CD8-positive, alpha-beta T cell (primary cell): ENCODE measurements at regions of chr4 and their contacts with region 1.

Region 1: DNA sequence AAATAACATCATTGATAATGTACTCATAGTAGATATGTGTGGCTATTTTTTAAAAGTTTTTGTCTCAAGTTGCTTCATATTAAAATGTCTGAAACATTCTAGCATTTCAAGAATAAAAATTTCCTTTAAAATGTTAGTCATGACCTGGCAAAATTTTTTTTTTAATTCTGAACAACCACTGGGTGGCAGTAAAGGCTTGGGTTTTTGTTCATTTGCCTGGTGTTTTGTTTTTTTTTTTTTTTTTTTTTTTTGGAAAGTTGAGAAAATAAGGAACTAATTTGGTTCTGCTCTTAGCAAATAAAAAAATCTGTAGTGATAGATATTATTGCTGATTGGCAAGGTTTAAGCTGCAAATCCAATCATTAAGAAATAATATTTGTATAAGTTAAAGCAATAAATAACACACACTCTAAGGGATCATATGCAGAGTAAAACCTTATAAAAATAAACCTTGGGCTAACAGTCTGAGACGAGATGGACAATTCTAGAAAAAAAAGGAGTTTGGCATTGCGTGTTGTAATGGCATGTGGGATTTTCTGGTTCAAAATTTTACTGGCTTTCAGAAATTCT is 81.4 kb downstream of the CEP44 start:
- DNase-seq: peak in 3 of 9 experiments; percentile 12 to 53 (median 49)
- ATAC-seq: no peak
- H3K4me3 ChIP-seq: no peak overlapping the region
- H3K4me3 Mint-ChIP-seq: no peak overlapping the region
- H3K27ac ChIP-seq: no peak overlapping the region
- H3K27ac Mint-ChIP-seq: no peak overlapping the region
- H3K4me1 ChIP-seq: no peaks in the 10 kb centered on the region
- H3K4me1 Mint-ChIP-seq: no peaks in the 10 kb centered on the region
- H3K27me3 ChIP-seq: no peaks in the 10 kb centered on the region
- H3K27me3 Mint-ChIP-seq: peaks cover 2% of the 10 kb centered on the region
- CTCF ChIP-seq: peak; percentile 70

Region 2: DNA sequence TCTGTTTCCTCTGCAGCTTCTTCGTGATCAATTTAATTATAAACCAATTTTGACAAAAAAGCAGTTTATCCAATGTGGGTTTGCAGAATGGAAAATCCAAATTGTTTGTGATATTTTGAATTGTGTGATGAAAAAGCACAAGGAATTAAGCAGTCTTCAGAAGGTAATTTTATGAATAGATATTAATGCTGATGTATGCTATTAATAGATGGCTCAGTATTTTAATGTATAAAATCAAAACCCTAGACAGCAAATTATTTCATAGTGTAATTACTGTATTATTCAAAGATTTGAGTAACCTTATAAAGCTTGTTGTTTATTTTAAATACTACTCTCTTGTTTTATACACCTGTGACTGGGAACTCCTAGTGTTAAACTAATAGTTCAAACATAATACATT is 61.4 kb before region 1 on chr4:
- CTCF ChIA-PET with region 1: no interaction called
- POLR2A ChIA-PET with region 1: no interaction called
- intact Hi-C with region 1: no loop called
- DNase-seq: no peak
- ATAC-seq: no peak
- H3K4me3 ChIP-seq: no peak overlapping the region
- H3K4me3 Mint-ChIP-seq: no peak overlapping the region
- H3K27ac ChIP-seq: no peak overlapping the region
- H3K27ac Mint-ChIP-seq: no peak overlapping the region
- H3K4me1 ChIP-seq: no peaks in the 10 kb centered on the region
- H3K4me1 Mint-ChIP-seq: peaks cover 7% of the 10 kb centered on the region
- H3K27me3 ChIP-seq: no peaks in the 10 kb centered on the region
- H3K27me3 Mint-ChIP-seq: no peaks in the 10 kb centered on the region
- CTCF ChIP-seq: no peak

Region 3: GRCh38 chr4:174402470-174403176 is 37.5 kb after region 1 on chr4:
- CTCF ChIA-PET with region 1: no interaction called
- POLR2A ChIA-PET with region 1: no interaction called
- intact Hi-C with region 1: no loop called
- DNase-seq: no peak
- ATAC-seq: no peak
- H3K4me3 ChIP-seq: no peak overlapping the region
- H3K4me3 Mint-ChIP-seq: no peak overlapping the region
- H3K27ac ChIP-seq: no peak overlapping the region
- H3K27ac Mint-ChIP-seq: no peak overlapping the region
- H3K4me1 ChIP-seq: no peaks in the 10 kb centered on the region
- H3K4me1 Mint-ChIP-seq: no peaks in the 10 kb centered on the region
- H3K27me3 ChIP-seq: no peaks in the 10 kb centered on the region
- H3K27me3 Mint-ChIP-seq: peaks cover 2% of the 10 kb centered on the region
- CTCF ChIP-seq: no peak

Region 4: DNA sequence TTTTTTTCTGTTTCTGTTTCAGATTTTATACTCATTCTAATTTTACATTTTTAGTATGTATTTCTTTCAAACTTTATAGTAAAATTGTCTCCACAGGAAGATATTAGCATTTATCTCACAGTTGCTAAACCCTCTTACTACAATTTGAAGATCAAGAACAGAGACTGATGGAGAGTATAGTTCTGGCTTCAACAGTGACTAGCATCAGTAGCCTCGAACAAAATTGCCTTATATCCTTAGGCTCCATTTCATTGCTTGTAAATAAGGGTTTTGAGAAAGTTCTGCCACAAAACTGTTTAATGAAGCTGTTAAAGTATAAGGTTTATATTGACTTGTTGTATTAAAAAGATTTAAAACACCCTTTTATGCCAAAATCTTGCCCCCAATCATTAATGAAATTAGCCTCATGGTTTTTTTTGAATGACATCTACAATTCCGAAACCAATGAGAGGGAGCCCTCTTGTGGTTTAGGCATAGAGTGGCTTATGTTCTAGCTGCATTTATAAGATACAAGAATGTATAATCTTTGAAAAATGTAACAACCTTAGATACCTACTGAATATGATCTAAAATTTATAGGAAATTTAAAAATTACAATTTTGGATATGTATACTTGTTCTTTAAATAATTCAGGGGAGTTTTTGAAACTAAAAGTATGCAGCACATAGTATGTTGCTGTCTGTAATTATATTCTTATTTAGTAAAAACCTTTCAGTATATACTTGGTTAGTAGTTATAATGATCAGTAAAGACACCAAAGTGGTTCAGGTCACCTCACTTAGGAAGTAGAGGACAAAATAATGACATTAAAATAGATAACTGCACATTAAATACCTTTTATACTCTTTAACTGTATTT is 267.0 kb after region 1 on chr4:
- CTCF ChIA-PET with region 1: interaction called, 8 read pairs
- POLR2A ChIA-PET with region 1: no interaction called
- intact Hi-C with region 1: loop called (anchors 1 kb)
- DNase-seq: peak in 2 of 9 experiments; percentile 45 to 56
- ATAC-seq: peak; percentile 29
- H3K4me3 ChIP-seq: no peak overlapping the region
- H3K4me3 Mint-ChIP-seq: no peak overlapping the region
- H3K27ac ChIP-seq: no peak overlapping the region
- H3K27ac Mint-ChIP-seq: no peak overlapping the region
- H3K4me1 ChIP-seq: no peaks in the 10 kb centered on the region
- H3K4me1 Mint-ChIP-seq: peaks cover 2% of the 10 kb centered on the region
- H3K27me3 ChIP-seq: no peaks in the 10 kb centered on the region
- H3K27me3 Mint-ChIP-seq: no peaks in the 10 kb centered on the region
- CTCF ChIP-seq: peak; percentile 48

Region 5: DNA sequence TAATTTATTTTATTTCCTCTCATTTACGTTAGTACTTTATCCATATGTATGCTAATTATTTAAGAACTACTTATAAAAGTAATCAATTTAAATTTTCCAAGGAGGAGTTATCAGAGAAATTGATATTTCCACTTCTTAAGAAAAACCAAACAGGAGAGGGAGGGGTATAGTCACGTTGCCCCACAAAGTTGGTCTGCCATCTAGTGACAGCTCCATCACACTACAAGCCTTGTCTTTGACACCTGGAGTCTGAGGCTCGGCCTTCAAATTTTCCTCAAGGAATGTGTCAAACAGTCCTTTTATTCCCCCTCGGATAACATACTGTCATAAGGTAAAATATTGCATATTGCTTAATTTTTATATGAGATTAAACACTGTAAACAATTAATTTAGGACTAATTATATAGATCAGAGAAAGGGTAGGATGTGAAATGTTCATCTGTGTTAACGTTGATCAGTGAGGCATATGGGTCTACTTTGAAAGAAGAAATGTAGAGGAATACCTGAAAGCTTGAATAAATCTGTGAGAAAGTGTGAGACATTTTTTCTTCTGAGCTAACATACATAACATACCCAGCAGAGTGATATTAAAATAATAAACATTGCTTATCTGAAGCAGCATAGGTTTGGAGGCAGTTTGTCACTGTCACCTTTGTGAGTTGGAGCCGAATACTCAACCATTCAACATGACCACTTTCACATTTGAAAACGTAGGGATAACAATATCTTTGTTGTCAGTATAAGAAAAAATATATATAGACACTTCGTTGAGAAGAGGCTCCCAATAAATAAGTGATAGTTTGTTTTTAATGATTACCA is 349.5 kb after region 1 on chr4:
- CTCF ChIA-PET with region 1: no interaction called
- POLR2A ChIA-PET with region 1: no interaction called
- intact Hi-C with region 1: loop called in 1 of 2 experiments (anchors 2 kb)
- DNase-seq: peak in 3 of 9 experiments; percentile 9 to 33 (median 27)
- ATAC-seq: no peak
- H3K4me3 ChIP-seq: no peak overlapping the region
- H3K4me3 Mint-ChIP-seq: no peak overlapping the region
- H3K27ac ChIP-seq: no peak overlapping the region
- H3K27ac Mint-ChIP-seq: no peak overlapping the region
- H3K4me1 ChIP-seq: no peaks in the 10 kb centered on the region
- H3K4me1 Mint-ChIP-seq: no peaks in the 10 kb centered on the region
- H3K27me3 ChIP-seq: no peaks in the 10 kb centered on the region
- H3K27me3 Mint-ChIP-seq: peaks cover 3% of the 10 kb centered on the region
- CTCF ChIP-seq: peak; percentile 48

Region 6: GRCh38 chr4:175536852-175537453 is 1171.8 kb after region 1 on chr4:
- CTCF ChIA-PET with region 1: no interaction called
- POLR2A ChIA-PET with region 1: no interaction called
- intact Hi-C with region 1: loop called in 1 of 2 experiments (anchors 5 kb)
- DNase-seq: no peak
- ATAC-seq: no peak
- H3K4me3 ChIP-seq: no peak overlapping the region
- H3K4me3 Mint-ChIP-seq: no peak overlapping the region
- H3K27ac ChIP-seq: no peak overlapping the region
- H3K27ac Mint-ChIP-seq: no peak overlapping the region
- H3K4me1 ChIP-seq: no peaks in the 10 kb centered on the region
- H3K4me1 Mint-ChIP-seq: no peaks in the 10 kb centered on the region
- H3K27me3 ChIP-seq: no peaks in the 10 kb centered on the region
- H3K27me3 Mint-ChIP-seq: peaks cover 2% of the 10 kb centered on the region
- CTCF ChIP-seq: no peak

Region 7: DNA sequence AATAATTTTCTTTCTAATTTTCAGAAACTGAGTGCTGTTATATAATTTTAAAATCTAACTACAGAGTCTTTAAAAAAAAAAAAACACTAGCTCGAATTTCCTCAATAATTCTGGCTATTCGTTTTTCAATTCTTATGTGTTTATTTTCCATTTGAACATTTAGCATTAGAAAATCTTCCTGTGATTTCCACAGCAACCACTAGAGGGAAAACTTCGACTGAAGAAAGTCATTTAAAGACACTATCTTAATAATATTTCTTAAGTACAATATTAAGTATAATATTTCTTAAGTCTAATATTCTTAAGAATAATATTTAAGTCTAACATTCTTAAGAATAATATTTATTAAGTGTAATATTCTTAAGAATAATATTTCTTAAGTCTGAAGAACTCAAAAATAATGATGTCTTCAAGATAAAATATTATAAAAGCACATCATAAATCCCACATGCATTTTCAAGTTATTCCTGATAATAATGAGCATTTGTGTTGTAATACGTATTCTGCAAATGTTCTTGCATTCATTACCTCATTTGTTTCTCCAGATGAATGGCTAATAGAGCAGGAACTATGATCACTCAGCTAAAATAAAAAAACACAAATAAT is 1582.1 kb after region 1 on chr4:
- CTCF ChIA-PET with region 1: no interaction called
- POLR2A ChIA-PET with region 1: no interaction called
- intact Hi-C with region 1: loop called in 1 of 2 experiments (anchors 10 kb)
- DNase-seq: peak in 2 of 9 experiments; percentile 15 to 26
- ATAC-seq: no peak
- H3K4me3 ChIP-seq: no peak overlapping the region
- H3K4me3 Mint-ChIP-seq: no peak overlapping the region
- H3K27ac ChIP-seq: no peak overlapping the region
- H3K27ac Mint-ChIP-seq: no peak overlapping the region
- H3K4me1 ChIP-seq: no peaks in the 10 kb centered on the region
- H3K4me1 Mint-ChIP-seq: peaks cover 6% of the 10 kb centered on the region
- H3K27me3 ChIP-seq: no peaks in the 10 kb centered on the region
- H3K27me3 Mint-ChIP-seq: peaks cover 7% of the 10 kb centered on the region
- CTCF ChIP-seq: peak; percentile 69